Left colon (tissue), 2 donors: ENCODE measurements at regions of chr1 and their contacts with region 1.

Region 1: GRCh38 chr1:225474986-225475820 is 47.4 kb upstream of the LBR start:
- DNase-seq: peak; percentile 59 to 67
- ATAC-seq: peak; percentile 87

Region 2: DNA sequence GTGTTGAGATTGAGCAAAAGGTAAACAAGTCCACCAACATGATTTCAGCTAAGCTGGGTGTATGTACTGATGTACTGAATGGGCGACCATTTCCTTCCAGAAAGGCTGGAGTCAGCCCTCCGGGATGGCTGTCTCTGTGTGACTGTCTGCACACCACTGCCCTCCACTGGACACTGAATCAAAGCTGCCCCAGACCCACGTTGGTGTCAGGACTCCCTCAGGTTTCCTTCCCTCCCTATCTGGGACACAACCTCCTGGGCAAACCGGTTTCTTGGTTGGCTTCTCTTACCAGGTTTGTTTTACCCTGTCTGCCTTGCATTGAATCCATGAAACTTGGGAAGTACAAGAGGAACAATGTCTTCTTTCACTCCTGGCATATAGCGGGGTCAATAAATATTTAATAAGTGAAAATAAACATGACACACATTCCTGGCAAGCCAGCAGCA is 297.1 kb after region 1 on chr1:
- intact Hi-C with region 1: loop called in 1 of 2 experiments (anchors 2 kb)
- DNase-seq: peak; percentile 86 to 87
- ATAC-seq: peak; percentile 93

Region 3: DNA sequence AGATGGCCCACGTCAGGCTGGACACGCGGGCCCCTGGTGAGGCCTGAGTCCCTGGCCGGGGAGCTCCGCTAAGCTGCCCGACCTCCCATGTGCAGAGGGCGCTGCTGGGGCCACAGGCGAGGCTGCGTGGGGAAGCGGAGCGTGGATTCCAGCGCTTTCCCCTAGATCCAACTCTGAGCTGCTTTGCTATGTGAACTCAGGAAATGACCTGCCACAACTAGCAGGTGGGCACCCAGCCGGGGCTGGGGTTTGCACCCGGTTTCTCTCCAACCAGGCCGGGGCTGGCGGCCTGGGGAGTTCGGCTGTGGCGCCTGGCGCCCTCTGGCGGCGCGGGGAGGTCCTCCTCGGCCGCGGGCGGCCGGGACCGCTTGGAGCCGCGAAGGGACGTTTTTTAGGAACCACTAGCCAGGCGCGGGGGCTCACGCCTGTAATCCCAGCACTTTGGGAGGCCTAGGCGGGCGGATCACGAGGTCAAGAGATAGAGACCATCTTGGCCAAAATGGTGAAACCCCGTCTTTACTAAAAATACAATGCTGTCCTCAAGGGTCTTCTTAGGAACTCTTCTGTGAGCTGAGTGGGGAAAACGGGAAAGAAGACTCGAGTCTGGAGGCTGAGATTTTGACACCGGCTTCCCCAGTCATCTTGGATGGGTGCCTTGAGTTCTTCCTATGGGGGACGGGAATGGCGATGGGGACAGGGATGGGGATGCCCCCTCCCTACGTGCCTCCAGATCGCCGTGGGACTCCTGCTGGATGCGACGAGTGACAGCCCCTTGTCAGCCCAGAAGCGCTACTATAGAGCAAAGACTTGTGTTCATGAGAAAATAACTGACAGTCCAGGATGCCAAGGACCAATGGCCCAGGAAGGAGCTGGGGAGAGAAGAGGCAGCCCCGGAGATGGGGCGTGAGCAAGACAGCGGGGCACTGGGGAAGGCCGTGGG is 436.3 kb after region 1 on chr1:
- intact Hi-C with region 1: loop called in 1 of 2 experiments (anchors 10 kb)
- DNase-seq: peak; percentile 52 to 80
- ATAC-seq: peak; percentile 82

Region 4: GRCh38 chr1:225977937-225978748 is 502.9 kb after region 1 on chr1:
- intact Hi-C with region 1: loop called (anchors 2 to 10 kb)
- DNase-seq: no peak
- ATAC-seq: no peak